Sciatic nerve (tissue), 2 donors: ENCODE measurements at regions of chrX and their contacts with region 1.

Region 1: DNA sequence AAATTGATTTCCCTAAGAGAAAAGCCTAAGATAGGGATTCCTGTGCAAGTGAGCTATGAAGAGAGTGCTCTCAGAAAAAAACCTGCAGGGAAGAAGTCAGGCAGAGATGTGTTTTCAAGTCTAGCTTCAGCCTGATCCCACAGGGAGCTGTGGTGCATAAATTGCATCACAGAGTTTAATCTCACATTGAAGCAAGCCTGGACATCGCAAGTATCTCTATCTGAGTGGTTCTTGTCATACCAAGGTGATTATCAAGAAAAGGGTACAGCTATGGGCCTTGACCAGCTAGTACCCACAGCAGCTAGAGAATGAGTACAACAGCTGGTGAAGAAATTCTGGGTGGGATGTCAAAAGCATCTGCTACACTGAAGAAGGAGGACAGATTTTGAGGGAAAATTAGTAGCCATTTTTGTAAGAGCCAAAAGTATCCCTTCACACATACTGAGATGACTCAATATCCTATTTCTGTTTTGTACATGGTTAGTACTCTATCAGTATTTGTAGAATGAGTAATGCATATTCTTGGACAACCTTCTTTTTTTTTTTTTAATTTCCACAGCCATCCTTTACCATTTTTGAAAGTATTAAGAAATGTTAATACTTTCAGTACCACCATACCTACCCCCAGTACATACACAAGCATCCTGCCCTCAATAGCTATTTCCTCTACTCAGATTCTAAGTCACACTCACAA is 708.9 kb downstream of the IL1RAPL1 start:
- DNase-seq: no peak
- ATAC-seq: no peak

Region 2: DNA sequence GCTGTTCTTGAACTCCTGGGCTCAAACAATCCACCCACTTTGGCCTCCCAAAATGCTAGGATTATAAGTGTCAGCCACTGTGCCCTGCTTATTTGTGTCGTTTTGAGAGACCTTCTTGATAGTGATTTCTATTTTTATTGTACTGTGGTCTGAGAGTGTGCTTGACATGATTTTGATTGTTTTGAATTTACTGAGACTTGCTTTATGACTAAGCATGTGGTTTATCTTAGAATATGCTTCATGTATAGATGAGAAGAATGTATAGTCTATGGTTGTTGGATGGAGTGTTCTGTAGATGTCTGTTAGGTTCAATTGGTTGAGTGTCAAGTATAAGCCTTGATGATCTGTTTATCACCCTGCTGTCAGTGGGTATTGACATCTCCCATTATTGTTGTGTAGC is 80.5 kb after region 1 on chrX:
- intact Hi-C with region 1: loop called (anchors 2 kb)
- DNase-seq: no peak
- ATAC-seq: no peak

Region 3: GRCh38 chrX:29604381-29604780 is 308.2 kb after region 1 on chrX:
- intact Hi-C with region 1: no loop called
- DNase-seq: no peak
- ATAC-seq: no peak

Region 4: DNA sequence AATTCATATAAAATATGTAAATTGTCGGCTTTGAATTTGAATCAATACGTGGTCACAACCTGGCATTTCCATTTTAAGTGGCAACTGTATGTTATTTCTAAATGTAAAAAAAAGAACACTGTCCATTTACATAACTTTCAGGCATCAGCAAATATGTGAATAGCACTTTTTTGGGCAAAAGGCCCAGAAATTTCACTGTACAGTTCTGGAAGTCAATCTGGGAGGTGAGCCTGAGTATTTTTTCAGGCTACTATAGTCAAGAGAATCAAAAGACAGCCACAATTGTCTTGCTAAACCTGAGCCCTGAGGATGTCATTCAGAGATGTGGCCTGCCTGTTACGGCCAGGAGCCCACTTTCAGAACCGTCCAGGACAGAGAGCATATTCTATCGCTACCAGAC is 375.3 kb after region 1 on chrX:
- intact Hi-C with region 1: loop called (anchors 5 kb)
- DNase-seq: no peak
- ATAC-seq: no peak